Activated CD4-positive, alpha-beta T cell treated with anti-CD3 and anti-CD28 coated beads for 36 hours (primary cell): ENCODE measurements at regions of chrX and their contacts with region 1.

Region 1: DNA sequence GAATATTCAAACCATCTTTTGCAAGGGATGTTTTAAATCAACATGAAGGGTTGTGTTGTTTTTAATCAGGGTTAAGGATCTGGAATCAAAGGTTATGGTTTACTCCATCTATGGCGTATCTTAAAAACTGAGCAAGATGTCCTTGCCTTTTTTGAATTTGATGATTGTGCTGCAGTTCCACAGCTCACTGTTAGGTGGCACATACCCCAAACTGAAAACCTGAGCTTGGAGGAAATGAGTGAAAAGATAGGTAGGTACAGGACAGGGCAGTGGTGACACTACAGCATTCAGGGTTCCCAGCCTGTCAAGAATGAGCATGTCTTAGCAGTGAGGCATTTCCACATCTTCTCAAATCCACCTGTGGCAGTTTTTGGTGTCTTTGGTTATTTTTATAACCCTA is 13.1 kb upstream of the EOLA1 start:
- DNase-seq: peak; percentile 43
- ATAC-seq: peak; percentile 48
- H3K4me3 Mint-ChIP-seq: no peak overlapping the region
- H3K27ac Mint-ChIP-seq: peak overlapping the region; percentile 56
- H3K4me1 Mint-ChIP-seq: peaks cover 35% of the 10 kb centered on the region
- H3K27me3 Mint-ChIP-seq: no peaks in the 10 kb centered on the region

Region 2: GRCh38 chrX:149504915-149505651 is 22.6 kb before region 1 on chrX and contains the start of gene IDS:
- CTCF ChIA-PET with region 1: interaction called, 4 read pairs
- POLR2A ChIA-PET with region 1: interaction called, 3 read pairs
- intact Hi-C with region 1: loop called in 1 of 2 experiments (anchors 2 kb)
- DNase-seq: peak; percentile 93
- ATAC-seq: peak; percentile 74
- H3K4me3 Mint-ChIP-seq: peak within 1 kb of the TSS; percentile 99
- H3K27ac Mint-ChIP-seq: peak within 1 kb of the TSS; percentile 99
- H3K4me1 Mint-ChIP-seq: peaks cover 31% of the 10 kb centered on the region
- H3K27me3 Mint-ChIP-seq: peaks cover under 1% of the 10 kb centered on the region
- total RNA-seq, gene IDS: 52.6 to 64.3 TPM

Region 3: DNA sequence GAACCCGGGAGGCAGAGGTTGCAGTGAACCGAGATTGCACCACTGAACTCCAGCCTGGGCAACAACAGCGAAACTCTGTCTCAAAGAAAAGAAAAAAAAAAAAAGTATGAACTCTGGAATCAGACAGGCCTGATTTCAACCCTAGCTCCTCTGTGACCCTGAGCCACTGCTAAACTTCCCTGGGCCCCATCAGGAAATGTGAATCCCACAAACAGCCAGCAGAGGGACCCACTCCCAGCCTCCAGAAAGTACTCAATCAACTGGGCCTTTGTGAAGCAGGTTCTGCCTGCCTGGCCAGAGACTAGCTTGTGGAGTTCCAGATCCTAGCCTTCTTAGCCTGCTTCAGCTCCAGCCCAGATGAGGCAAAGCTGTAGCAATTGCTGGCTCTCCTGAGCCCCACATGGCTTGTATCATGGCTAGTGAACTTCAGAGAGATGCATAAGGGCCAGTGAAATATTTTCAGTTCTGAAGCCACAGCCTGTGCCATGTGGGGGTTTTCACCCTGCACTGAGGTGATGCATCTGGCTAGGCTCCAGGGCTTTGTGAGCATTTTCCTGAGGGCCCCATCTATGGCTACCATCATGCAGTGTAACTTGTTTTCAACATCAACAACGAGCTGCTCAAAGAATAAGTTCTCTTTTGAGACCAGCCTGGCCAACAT is 15.3 kb before region 1 on chrX:
- CTCF ChIA-PET with region 1: interaction called, 16 read pairs
- POLR2A ChIA-PET with region 1: no interaction called
- intact Hi-C with region 1: no loop called
- DNase-seq: peak; percentile 68
- ATAC-seq: peak; percentile 77
- H3K4me3 Mint-ChIP-seq: no peak overlapping the region
- H3K27ac Mint-ChIP-seq: no peak overlapping the region
- H3K4me1 Mint-ChIP-seq: peaks cover 28% of the 10 kb centered on the region
- H3K27me3 Mint-ChIP-seq: peaks cover 2% of the 10 kb centered on the region

Region 4: DNA sequence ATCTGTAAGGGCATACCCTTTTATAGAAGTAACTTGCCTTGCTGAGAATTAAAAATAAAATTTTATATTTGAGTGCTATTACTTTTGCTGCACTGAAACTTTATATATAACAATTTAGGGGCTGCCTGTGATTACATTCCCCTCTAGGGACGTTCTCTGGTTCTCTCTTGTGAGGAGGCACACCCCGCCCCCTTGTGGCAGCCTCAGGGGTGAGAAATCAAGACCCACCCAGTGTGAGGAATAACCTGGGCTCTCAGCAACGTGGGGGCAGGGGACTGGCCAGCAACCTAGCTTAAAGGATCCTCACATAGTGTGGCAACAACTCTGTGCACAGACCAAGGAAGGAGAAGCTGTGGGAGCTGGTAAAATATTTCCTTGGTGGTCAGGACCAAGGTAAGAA is 297.7 kb after region 1 on chrX:
- CTCF ChIA-PET with region 1: no interaction called
- POLR2A ChIA-PET with region 1: no interaction called
- intact Hi-C with region 1: loop called in 1 of 2 experiments (anchors 5 kb)
- DNase-seq: peak; percentile 72
- ATAC-seq: no peak
- H3K4me3 Mint-ChIP-seq: no peak overlapping the region
- H3K27ac Mint-ChIP-seq: no peak overlapping the region
- H3K4me1 Mint-ChIP-seq: peaks cover 17% of the 10 kb centered on the region
- H3K27me3 Mint-ChIP-seq: peaks cover 18% of the 10 kb centered on the region